BJ (cell line): ENCODE measurements at regions of chr13 and their contacts with region 1.

Region 1: DNA sequence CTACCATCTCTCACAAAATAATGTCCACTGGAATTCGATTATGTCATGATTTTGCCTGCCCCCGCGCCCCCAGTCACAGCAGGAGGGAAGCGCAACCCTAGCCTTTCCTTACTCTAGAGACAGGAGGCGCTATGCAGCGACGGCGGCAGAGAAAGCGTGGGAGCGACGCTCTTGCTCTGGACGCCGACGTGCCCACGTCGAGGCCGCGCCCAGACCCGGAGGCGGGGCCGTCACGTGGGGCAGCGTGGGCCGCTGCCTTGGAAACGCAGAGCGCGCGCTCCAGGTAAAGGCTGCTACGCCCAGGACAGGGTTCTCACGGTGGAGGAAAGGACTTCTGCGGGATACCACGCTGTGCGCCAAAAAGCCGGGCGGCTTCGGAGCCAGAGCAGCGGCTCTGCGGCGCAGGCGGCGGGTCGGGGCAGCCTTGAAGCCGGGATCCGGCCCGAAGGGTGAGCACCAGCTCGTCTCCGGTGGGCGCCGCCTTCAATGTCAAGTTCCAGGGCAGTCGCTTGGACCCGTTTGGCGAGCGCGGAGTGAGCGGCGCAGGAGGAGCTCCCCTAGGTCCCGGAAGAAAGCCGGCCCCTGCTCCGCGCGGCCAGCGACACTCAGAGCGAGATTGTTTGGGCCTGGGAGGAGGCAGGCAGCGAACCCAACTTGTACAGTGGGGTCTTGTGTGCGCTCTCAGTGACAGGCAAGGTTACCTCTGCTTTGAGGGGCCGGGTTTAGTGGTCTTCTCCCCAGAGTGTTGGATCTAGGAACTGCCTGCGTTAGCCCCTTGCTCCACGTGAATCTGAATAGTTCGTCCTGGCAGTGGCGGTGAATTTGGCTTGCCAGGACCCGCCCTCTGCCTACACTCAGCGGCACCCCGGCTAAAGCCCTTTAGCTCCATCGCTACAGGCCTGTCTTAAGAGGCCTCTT is 121.7 kb downstream of the MRPL57 start:
- DNase-seq: peak; percentile 37
- H3K4me3 ChIP-seq: peak overlapping the region; percentile 78
- H3K27me3 ChIP-seq: no peaks in the 10 kb centered on the region
- CTCF ChIP-seq: peak; percentile 93

Region 2: GRCh38 chr13:21359855-21360254 is 61.7 kb after region 1 on chr13:
- CTCF ChIA-PET with region 1: no interaction called
- POLR2A ChIA-PET with region 1: no interaction called
- DNase-seq: no peak
- H3K4me3 ChIP-seq: no peak overlapping the region
- H3K27me3 ChIP-seq: peaks cover 3% of the 10 kb centered on the region; the same call in 1 of the 2 replicates
- CTCF ChIP-seq: no peak

Region 3: GRCh38 chr13:21458813-21459701 is 160.9 kb after region 1 on chr13 and contains the start of gene ZDHHC20:
- CTCF ChIA-PET with region 1: interaction called, 17 read pairs
- POLR2A ChIA-PET with region 1: no interaction called
- DNase-seq: no peak
- H3K4me3 ChIP-seq: peak within 1 kb of the TSS; percentile 83
- H3K27me3 ChIP-seq: no peaks in the 10 kb centered on the region
- CTCF ChIP-seq: no peak
- polyA plus RNA-seq, gene ZDHHC20: 20.2 and 51.3 TPM in 2 replicates

Region 4: GRCh38 chr13:21476893-21477472 is 178.8 kb after region 1 on chr13:
- CTCF ChIA-PET with region 1: interaction called, 94 read pairs
- POLR2A ChIA-PET with region 1: no interaction called
- DNase-seq: no peak
- H3K4me3 ChIP-seq: peak overlapping the region; percentile 42
- H3K27me3 ChIP-seq: no peaks in the 10 kb centered on the region
- CTCF ChIP-seq: peak; percentile 99

Region 5: DNA sequence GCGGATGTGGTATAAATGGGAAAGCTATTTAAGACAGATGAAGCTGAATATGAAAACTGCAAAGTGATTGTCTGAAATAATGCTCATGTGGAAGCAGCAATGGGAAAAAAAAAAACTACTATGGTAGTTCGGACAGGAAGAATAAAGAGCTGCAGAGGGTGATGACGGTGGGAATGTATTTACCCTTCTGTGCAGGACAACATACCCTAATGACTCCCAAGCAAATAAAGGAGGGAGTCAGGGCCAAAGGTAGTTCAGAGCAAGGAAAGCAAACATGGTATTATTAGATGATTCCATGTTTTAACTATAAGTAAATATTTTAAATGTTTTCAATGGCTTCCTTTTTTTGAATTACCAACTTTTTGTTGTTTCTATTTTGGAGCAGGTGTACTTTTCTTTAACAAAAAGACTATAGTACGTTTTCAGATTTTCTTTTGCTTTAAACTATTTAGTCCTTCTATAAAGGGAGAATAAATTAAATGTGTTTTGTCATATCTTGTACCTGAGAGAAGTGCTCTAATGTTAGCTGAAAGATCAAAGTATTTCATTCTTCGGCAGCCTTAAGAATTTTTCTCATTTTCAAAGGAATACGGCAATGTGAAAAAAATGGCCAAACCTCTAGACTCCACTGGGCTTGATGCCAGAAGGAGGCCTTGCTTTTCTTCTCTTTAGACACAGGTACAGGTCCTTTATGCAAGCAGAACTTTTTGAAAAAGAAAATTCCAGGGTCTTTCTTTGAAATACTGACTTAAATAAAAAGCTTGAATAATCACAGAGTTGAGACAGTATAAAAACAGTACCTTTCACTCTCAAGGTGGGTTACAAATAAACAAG is 228.8 kb after region 1 on chr13:
- CTCF ChIA-PET with region 1: no interaction called
- POLR2A ChIA-PET with region 1: no interaction called
- DNase-seq: no peak
- H3K4me3 ChIP-seq: no peak overlapping the region
- H3K27me3 ChIP-seq: no peaks in the 10 kb centered on the region
- CTCF ChIP-seq: no peak